Heart right ventricle (tissue), 16 donors: ENCODE measurements at regions of chr12 and their contacts with region 1.

Region 1: DNA sequence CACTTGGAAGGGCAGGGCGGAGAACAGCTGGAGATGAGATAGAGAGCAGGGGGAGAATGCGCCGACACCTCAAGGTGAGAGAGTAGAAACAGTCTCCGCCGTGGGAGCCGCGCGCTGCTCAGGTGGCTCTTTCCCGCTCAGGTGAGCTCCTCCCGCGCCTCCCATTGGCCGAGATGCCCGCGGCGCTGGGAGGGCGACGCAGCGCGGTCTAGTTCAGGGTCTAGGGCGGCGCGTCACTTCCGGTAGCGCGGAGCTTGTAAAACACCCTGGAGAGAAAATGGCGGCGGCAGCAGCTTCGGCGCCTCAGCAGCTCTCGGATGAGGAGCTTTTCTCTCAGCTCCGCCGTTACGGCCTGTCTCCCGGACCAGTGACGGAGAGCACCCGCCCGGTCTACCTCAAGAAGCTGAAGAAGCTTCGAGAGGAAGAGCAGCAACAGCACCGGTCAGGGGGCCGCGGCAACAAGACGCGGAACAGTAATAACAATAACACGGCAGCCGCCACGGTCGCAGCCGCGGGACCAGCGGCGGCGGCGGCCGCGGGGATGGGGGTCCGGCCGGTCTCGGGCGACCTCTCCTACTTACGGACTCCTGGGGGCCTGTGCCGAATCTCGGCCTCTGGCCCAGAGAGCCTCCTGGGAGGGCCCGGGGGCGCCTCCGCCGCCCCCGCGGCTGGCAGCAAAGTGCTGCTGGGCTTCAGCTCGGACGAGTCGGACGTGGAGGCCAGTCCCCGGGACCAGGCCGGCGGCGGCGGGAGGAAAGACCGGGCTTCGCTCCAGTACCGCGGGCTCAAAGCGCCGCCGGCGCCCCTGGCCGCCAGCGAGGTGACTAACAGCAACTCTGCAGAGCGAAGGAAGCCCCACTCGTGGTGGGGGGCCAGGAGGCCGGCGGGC is at the start of gene LEMD3:
- DNase-seq: peak; percentile 90 to 92
- ATAC-seq: peak; percentile 96 to 98 (median 98)
- H3K4me3 ChIP-seq: peak within 1 kb of the TSS; percentile 72 to 99 (median 94)
- H3K27ac ChIP-seq: peak within 1 kb of the TSS; percentile 91 to 98 (median 96)
- H3K4me1 ChIP-seq: peaks cover 0 to 47% (median 43%) of the 10 kb centered on the region in 9 donors
- H3K27me3 ChIP-seq: peaks cover 0 to 2% (median 0%) of the 10 kb centered on the region in 7 donors
- CTCF ChIP-seq: peak in 4 of 9 donors; percentile 3 to 21 (median 16)
- total RNA-seq, gene LEMD3: 10.1 to 16.3 (median 12.1) TPM

Region 2: DNA sequence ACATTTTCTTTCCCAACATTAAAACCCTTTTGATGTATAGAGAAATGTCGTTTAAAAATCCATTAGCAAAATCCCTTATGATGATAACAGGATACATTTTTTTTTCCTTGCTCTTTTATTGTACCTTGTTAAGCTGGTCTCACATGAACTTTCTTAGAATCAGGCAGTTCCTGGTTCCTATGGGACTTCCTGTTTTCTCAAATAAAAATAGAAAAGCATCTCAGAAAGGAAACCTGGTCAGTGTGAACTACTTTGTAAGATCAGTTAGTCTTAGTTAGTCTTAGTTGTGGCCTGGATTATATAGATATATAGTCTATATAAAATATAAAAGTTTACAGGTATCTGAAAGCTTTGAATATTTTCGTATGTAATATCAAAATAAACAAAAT is 40.1 kb after region 1 on chr12:
- intact Hi-C with region 1: loop called in 3 of 10 experiments (anchors 5 kb)
- DNase-seq: no peak
- ATAC-seq: peak in 5 of 8 donors; percentile 42 to 77 (median 64)
- H3K4me3 ChIP-seq: no peak overlapping the region
- H3K27ac ChIP-seq: peak overlapping the region in 3 of 10 donors; percentile 25 to 46 (median 32)
- H3K4me1 ChIP-seq: peaks cover 0 to 55% (median 28%) of the 10 kb centered on the region in 9 donors
- H3K27me3 ChIP-seq: no peaks in the 10 kb centered on the region
- CTCF ChIP-seq: no peak

Region 3: DNA sequence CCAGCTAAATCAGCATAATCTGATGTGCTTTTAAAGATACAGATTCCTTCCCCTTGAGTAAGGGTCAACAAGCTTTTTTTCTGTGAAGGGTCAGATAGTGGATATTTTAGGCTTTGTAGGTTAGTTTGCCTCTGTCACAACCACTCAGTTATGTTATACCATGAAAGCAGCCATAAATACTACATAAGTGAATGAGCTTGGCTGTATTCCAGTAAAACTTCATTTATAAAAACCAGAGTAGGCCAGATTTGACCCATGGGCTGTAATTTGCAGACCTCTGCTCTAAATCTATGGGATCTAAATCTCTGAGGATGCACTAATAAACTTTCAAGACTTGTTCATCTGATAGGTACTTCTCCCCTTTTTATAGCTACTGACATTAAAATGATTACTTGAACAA is 47.5 kb after region 1 on chr12:
- intact Hi-C with region 1: loop called in 2 of 10 experiments (anchors 5 kb)
- DNase-seq: no peak
- ATAC-seq: no peak
- H3K4me3 ChIP-seq: no peak overlapping the region
- H3K27ac ChIP-seq: no peak overlapping the region
- H3K4me1 ChIP-seq: peaks cover 0 to 12% (median 0%) of the 10 kb centered on the region in 9 donors
- H3K27me3 ChIP-seq: no peaks in the 10 kb centered on the region
- CTCF ChIP-seq: no peak

Region 4: GRCh38 chr12:65232476-65233077 is 63.0 kb after region 1 on chr12:
- intact Hi-C with region 1: loop called in 4 of 10 experiments (anchors 2 to 5 kb)
- DNase-seq: no peak
- ATAC-seq: no peak
- H3K4me3 ChIP-seq: no peak overlapping the region
- H3K27ac ChIP-seq: no peak overlapping the region
- H3K4me1 ChIP-seq: peaks cover 0 to 6% (median 0%) of the 10 kb centered on the region in 9 donors
- H3K27me3 ChIP-seq: no peaks in the 10 kb centered on the region
- CTCF ChIP-seq: peak; percentile 40 to 73 (median 57)

Region 5: DNA sequence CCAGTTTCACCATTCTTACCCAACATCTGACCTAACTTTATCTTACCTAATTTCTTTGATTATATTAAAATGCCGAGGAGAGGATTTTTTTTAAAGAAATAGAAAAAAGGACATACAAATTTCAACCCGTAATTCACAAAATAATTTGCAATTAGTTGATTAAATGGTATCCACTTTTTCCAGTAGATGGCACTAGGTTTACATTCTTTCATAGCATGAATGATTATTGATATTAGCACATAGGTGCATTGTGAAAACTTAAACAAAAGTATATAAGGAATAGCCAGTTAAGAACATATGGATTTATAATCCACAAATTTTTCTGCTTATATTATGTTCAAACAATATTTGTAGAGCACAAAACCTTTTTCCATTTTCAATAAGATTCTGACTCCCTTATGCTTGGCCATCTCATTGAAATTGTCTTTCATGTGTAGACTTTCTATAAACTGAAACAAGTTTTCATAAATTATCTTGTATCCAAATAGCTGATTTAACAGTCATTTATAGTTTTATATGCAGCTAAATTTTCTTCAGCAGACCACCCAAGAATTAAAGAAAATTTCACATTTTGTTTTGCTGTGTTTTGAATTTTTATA is 144.3 kb after region 1 on chr12:
- intact Hi-C with region 1: no loop called
- DNase-seq: no peak
- ATAC-seq: no peak
- H3K4me3 ChIP-seq: no peak overlapping the region
- H3K27ac ChIP-seq: no peak overlapping the region
- H3K4me1 ChIP-seq: peaks cover 0 to 5% (median 2%) of the 10 kb centered on the region in 9 donors
- H3K27me3 ChIP-seq: no peaks in the 10 kb centered on the region
- CTCF ChIP-seq: peak in 7 of 9 donors; percentile 35 to 62 (median 48)